MCF 10A (cell line): ENCODE measurements at regions of chr9 and their contacts with region 1.

Region 1: DNA sequence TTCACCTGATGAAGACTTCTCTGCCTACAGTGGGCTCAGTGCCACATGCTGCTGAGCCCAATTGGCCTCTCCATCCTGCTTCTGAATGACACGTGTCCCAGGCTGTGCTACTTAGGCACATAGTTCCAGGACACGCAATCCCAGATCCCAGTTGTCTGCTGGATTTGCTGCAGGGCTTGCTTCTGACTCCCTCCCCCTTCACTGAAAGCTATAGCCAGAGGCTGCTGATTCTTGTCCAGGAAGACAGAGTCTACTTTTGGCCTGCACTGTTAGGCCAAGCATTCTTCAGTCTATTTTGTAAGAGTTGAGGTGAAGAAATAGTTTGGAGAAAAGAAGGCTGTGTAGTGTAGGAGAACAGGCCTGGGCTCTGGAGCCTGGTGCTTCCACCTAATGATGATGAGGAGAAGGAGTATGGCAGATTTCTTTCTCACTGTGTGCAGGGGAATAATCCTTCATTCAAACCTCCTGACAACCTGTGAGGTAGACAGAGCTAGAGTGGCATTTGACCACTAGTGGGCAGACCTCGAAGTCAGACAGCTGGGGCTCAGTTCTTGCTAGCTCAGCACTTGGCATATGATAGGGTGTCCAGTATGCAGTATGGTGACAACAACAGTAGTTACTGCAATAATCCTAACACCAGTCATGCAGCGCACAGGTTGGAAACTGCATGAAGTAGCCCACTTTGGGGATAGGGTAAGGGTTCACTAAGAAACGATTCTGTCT is 19.5 kb upstream of the ASPN start:
- DNase-seq: peak; percentile 68
- H3K4me3 Mint-ChIP-seq: peak overlapping the region; percentile 8
- H3K27ac Mint-ChIP-seq: peak overlapping the region; percentile 57
- H3K4me1 Mint-ChIP-seq: peaks cover 28% of the 10 kb centered on the region
- H3K27me3 Mint-ChIP-seq: no peaks in the 10 kb centered on the region
- CTCF ChIP-seq: peak; percentile 47

Region 2: DNA sequence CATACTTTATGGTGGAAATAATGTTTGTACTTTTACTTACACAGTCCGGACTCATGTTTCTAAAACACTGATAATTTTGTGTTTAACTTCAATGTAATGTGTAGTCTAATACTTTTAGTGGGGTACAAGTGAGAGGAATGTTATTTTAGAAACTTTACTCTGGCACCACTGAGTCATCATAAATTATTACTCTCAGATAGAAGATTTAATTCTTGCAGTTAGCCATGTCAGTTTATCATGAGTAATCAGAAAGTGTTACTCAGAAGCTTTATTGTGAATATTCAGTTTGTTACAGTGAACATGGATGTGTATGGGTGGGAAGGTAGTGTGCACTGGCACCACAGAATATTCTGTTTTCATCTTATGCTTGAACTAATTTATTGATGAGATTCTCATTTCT is 117.5 kb before region 1 on chr9:
- CTCF ChIA-PET with region 1: interaction called, 3 read pairs
- POLR2A ChIA-PET with region 1: interaction called, 35 read pairs
- intact Hi-C with region 1: no loop called
- DNase-seq: peak; percentile 34
- H3K4me3 Mint-ChIP-seq: peak overlapping the region; percentile 6
- H3K27ac Mint-ChIP-seq: peak overlapping the region; percentile 79
- H3K4me1 Mint-ChIP-seq: peaks cover 20% of the 10 kb centered on the region
- H3K27me3 Mint-ChIP-seq: no peaks in the 10 kb centered on the region
- CTCF ChIP-seq: no peak

Region 3: GRCh38 chr9:92463984-92464383 is 37.8 kb before region 1 on chr9:
- CTCF ChIA-PET with region 1: interaction called, 3 read pairs
- POLR2A ChIA-PET with region 1: interaction called, 10 read pairs
- intact Hi-C with region 1: no loop called
- DNase-seq: peak; percentile 63
- H3K4me3 Mint-ChIP-seq: no peak overlapping the region
- H3K27ac Mint-ChIP-seq: peak overlapping the region; percentile 82
- H3K4me1 Mint-ChIP-seq: peaks cover 18% of the 10 kb centered on the region
- H3K27me3 Mint-ChIP-seq: no peaks in the 10 kb centered on the region
- CTCF ChIP-seq: no peak

Region 4: DNA sequence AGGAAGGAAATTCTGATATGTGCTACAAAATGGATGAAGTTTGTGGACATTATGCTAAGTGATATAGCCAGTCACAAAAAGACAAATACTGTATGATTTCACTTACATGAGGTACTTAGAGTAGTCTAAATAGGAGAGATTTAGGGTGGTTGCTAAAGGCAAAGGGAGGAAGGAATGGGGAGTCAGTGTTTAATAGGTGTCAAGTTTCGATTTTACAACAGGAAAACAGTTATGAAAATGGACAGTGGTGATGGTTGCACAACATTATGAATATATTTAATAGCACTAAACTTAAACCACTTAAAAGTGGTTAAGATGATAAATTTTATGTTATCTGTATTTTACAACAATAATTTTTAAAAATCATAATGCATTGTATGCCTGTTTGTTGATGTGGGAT is 74.3 kb after region 1 on chr9:
- CTCF ChIA-PET with region 1: no interaction called
- POLR2A ChIA-PET with region 1: no interaction called
- intact Hi-C with region 1: no loop called
- DNase-seq: peak; percentile 43
- H3K4me3 Mint-ChIP-seq: no peak overlapping the region
- H3K27ac Mint-ChIP-seq: no peak overlapping the region
- H3K4me1 Mint-ChIP-seq: peaks cover 6% of the 10 kb centered on the region
- H3K27me3 Mint-ChIP-seq: no peaks in the 10 kb centered on the region
- CTCF ChIP-seq: no peak

Region 5: GRCh38 chr9:92590377-92590776 is 88.5 kb after region 1 on chr9:
- CTCF ChIA-PET with region 1: no interaction called
- POLR2A ChIA-PET with region 1: no interaction called
- intact Hi-C with region 1: no loop called
- DNase-seq: no peak
- H3K4me3 Mint-ChIP-seq: no peak overlapping the region
- H3K27ac Mint-ChIP-seq: no peak overlapping the region
- H3K4me1 Mint-ChIP-seq: no peaks in the 10 kb centered on the region
- H3K27me3 Mint-ChIP-seq: no peaks in the 10 kb centered on the region
- CTCF ChIP-seq: no peak

Region 6: GRCh38 chr9:92607773-92608172 is 105.9 kb after region 1 on chr9:
- CTCF ChIA-PET with region 1: interaction called, 5 read pairs
- POLR2A ChIA-PET with region 1: interaction called, 3 read pairs
- intact Hi-C with region 1: loop called (anchors 5 kb)
- DNase-seq: peak; percentile 57
- H3K4me3 Mint-ChIP-seq: no peak overlapping the region
- H3K27ac Mint-ChIP-seq: no peak overlapping the region
- H3K4me1 Mint-ChIP-seq: peaks cover 8% of the 10 kb centered on the region
- H3K27me3 Mint-ChIP-seq: no peaks in the 10 kb centered on the region
- CTCF ChIP-seq: no peak

Region 7: GRCh38 chr9:92669890-92670708 is 168.3 kb after region 1 on chr9 and contains the start of gene IPPK:
- CTCF ChIA-PET with region 1: interaction called, 4 read pairs
- POLR2A ChIA-PET with region 1: interaction called, 10 read pairs
- intact Hi-C with region 1: no loop called
- DNase-seq: peak; percentile 99
- H3K4me3 Mint-ChIP-seq: peak within 1 kb of the TSS; percentile 74
- H3K27ac Mint-ChIP-seq: peak within 1 kb of the TSS; percentile 69
- H3K4me1 Mint-ChIP-seq: peaks cover 10% of the 10 kb centered on the region
- H3K27me3 Mint-ChIP-seq: no peaks in the 10 kb centered on the region
- CTCF ChIP-seq: no peak
- total RNA-seq, gene IPPK: 16.3 and 16.6 TPM in 2 replicates